Spleen (tissue), 13 donors: ENCODE measurements at regions of chr21 and their contacts with region 1.

Region 1: GRCh38 chr21:46323227-46324128 is at the start of gene C21orf58:
- DNase-seq: peak; percentile 98
- H3K4me3 ChIP-seq: peak within 1 kb of the TSS; percentile 79 to 100 (median 94)
- H3K27ac ChIP-seq: peak within 1 kb of the TSS; percentile 86 to 100 (median 98)
- H3K4me1 ChIP-seq: peaks cover 15 to 69% (median 43%) of the 10 kb centered on the region in 6 donors
- H3K27me3 ChIP-seq: no peaks in the 10 kb centered on the region
- CTCF ChIP-seq: peak in 3 of 11 experiments; percentile 5 to 33 (median 32)
- POLR2A ChIP-seq: no peak
- total RNA-seq, gene C21orf58: 3.6 to 5.8 (median 4.7) TPM

Region 2: GRCh38 chr21:46285761-46286496 is 37.5 kb before region 1 on chr21 and contains the start of gene YBEY:
- intact Hi-C with region 1: loop called (anchors 5 kb)
- DNase-seq: peak; percentile 97
- H3K4me3 ChIP-seq: peak within 1 kb of the TSS; percentile 68 to 99 (median 92)
- H3K27ac ChIP-seq: peak within 1 kb of the TSS; percentile 90 to 98 (median 96)
- H3K4me1 ChIP-seq: peaks cover 39 to 92% (median 58%) of the 10 kb centered on the region in 6 donors
- H3K27me3 ChIP-seq: no peaks in the 10 kb centered on the region
- CTCF ChIP-seq: peak in 9 of 11 experiments; percentile 12 to 69 (median 30)
- POLR2A ChIP-seq: peak; percentile 11 to 51 (median 51)
- total RNA-seq, gene YBEY: 7.8 to 20.6 (median 12.0) TPM

Region 3: GRCh38 chr21:46374761-46375389 is 51.4 kb after region 1 on chr21:
- intact Hi-C with region 1: no loop called
- DNase-seq: no peak
- H3K4me3 ChIP-seq: no peak overlapping the region
- H3K27ac ChIP-seq: no peak overlapping the region
- H3K4me1 ChIP-seq: peaks cover 0 to 6% (median under 1%) of the 10 kb centered on the region in 6 donors
- H3K27me3 ChIP-seq: no peaks in the 10 kb centered on the region
- CTCF ChIP-seq: no peak
- POLR2A ChIP-seq: no peak

Region 4: GRCh38 chr21:46458315-46459023 is 135.0 kb after region 1 on chr21 and contains the start of gene DIP2A:
- intact Hi-C with region 1: loop called (anchors 5 kb)
- DNase-seq: peak; percentile 99
- H3K4me3 ChIP-seq: peak within 1 kb of the TSS; percentile 89 to 97 (median 94)
- H3K27ac ChIP-seq: peak within 1 kb of the TSS; percentile 88 to 96 (median 94)
- H3K4me1 ChIP-seq: peaks cover 11 to 78% (median 47%) of the 10 kb centered on the region in 6 donors
- H3K27me3 ChIP-seq: no peaks in the 10 kb centered on the region
- CTCF ChIP-seq: peak in 3 of 11 experiments; percentile 20 to 39 (median 32)
- POLR2A ChIP-seq: peak; percentile 11 to 88 (median 34)
- total RNA-seq, gene DIP2A: 50.1 to 96.7 (median 68.6) TPM